Activated naive CD4-positive, alpha-beta T cell treated with anti-CD3 and anti-CD28 coated beads for 36 hours (primary cell): ENCODE measurements at regions of chr7 and their contacts with region 1.

Region 1: GRCh38 chr7:138738551-138739335 is 37.6 kb upstream of the SVOPL start:
- DNase-seq: peak; percentile 94
- H3K4me3 Mint-ChIP-seq: no peak overlapping the region
- H3K27ac Mint-ChIP-seq: no peak overlapping the region
- H3K4me1 Mint-ChIP-seq: peaks cover 6% of the 10 kb centered on the region
- H3K27me3 Mint-ChIP-seq: no peaks in the 10 kb centered on the region

Region 2: DNA sequence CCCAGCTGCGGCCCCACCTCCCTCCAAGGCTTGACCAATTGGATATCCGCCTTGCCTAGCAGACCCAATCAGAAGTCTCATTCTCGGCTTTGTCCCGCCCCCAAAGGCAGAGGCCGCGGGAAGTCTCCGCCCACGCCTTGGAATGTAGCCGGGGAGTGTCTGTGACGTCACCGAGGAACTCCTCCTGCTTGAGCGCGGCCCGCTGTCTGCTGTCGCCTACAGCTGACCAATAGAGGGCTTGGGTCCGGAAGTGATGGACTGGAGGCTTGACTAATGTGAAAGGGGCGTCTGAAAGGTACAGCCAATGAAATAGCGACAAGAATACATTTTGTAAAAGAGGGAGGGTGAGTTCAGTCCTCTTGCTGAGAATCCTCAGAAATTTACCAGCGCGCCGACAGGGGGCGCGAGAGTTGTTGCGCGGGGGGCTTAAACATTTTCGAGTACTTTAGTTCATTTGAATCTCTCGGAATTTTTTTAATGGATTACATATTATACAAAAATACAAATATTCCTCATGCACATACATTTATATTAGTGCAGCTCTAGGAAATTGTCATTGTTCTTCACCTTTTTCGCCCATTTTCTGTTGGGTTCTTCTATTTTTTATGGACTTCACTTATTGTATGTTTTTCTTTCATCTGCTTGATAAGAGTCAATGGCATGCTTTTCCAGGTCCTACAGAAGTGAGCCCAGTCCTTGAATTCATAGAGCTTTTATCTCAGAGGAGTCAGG is 736.5 kb before region 1 on chr7:
- CTCF ChIA-PET with region 1: no interaction called
- intact Hi-C with region 1: loop called (anchors 2 kb)
- DNase-seq: peak; percentile 98
- H3K4me3 Mint-ChIP-seq: peak overlapping the region; percentile 91
- H3K27ac Mint-ChIP-seq: peak overlapping the region; percentile 76
- H3K4me1 Mint-ChIP-seq: peaks cover 25% of the 10 kb centered on the region
- H3K27me3 Mint-ChIP-seq: no peaks in the 10 kb centered on the region

Region 3: DNA sequence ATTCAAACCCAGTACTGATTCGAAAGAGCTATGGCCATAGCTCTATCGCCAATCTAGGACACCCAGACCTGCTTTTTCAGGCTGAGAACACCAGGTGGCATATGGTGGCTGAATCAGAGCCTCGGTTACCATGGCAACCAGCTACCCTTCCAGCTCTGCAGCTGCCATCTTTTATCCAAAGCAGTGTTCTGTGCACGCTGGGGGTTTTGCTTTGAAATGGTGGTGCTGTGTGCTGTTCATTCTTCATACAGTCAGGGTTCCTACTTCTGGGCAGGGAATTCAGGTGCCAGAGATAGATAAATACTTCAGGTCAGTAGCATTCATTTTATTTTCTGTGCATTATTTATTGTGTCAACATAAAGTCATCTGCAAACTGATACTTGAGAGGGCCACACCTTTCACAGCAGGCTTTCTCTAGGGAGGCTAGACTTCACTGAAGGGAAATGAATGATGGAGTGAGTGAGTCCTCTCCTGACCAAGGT is 577.1 kb before region 1 on chr7:
- CTCF ChIA-PET with region 1: interaction called, 33 read pairs
- intact Hi-C with region 1: loop called (anchors 1 kb)
- DNase-seq: peak; percentile 88
- H3K4me3 Mint-ChIP-seq: no peak overlapping the region
- H3K27ac Mint-ChIP-seq: no peak overlapping the region
- H3K4me1 Mint-ChIP-seq: no peaks in the 10 kb centered on the region
- H3K27me3 Mint-ChIP-seq: no peaks in the 10 kb centered on the region

Region 4: GRCh38 chr7:138359906-138360582 is 378.7 kb before region 1 on chr7:
- CTCF ChIA-PET with region 1: no interaction called
- intact Hi-C with region 1: loop called (anchors 5 kb)
- DNase-seq: no peak
- H3K4me3 Mint-ChIP-seq: no peak overlapping the region
- H3K27ac Mint-ChIP-seq: no peak overlapping the region
- H3K4me1 Mint-ChIP-seq: no peaks in the 10 kb centered on the region
- H3K27me3 Mint-ChIP-seq: no peaks in the 10 kb centered on the region

Region 5: DNA sequence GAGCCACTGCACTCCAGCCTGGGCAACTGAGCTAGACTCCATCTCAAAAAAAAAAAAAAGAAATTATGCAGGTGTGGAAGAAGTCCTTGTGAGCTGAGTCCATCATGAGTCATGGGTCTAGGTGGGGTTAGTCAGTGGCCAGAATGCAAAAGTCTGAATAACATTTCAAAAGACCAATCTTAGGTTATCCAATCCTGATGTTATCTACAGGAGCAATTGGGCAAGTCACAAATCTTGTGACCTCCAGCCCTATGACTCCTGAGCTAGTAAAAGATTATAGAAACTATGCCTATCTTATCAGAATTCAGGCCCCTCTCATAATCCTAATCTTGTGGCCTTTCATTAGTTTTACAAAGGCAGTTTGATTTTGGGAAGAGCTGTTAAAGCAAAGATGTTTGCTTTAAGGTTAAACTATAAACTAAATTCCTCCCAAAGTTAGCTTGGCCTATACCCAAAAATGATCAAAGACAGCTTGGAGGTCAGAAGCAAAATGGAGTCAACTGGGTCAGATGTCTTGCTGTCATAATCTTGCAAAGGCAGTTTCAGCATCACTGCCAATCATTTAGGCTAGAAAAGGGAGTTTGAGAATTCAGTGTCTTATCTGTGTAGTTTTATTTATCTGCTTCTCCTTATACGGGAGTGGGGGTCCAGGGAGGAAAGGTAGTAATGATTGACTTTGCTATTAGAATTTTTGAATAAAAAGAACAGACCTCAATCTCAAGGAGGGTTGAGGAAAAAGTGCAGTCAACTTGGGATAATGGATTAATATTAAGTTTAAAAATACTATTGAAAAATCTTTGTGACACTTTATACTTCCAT is 349.9 kb before region 1 on chr7:
- CTCF ChIA-PET with region 1: no interaction called
- intact Hi-C with region 1: no loop called
- DNase-seq: no peak
- H3K4me3 Mint-ChIP-seq: no peak overlapping the region
- H3K27ac Mint-ChIP-seq: no peak overlapping the region
- H3K4me1 Mint-ChIP-seq: no peaks in the 10 kb centered on the region
- H3K27me3 Mint-ChIP-seq: no peaks in the 10 kb centered on the region

Region 6: GRCh38 chr7:138625849-138626230 is 112.9 kb before region 1 on chr7:
- CTCF ChIA-PET with region 1: interaction called, 14 read pairs
- intact Hi-C with region 1: no loop called
- DNase-seq: peak; percentile 38
- H3K4me3 Mint-ChIP-seq: no peak overlapping the region
- H3K27ac Mint-ChIP-seq: peak overlapping the region; percentile 72
- H3K4me1 Mint-ChIP-seq: peaks cover 43% of the 10 kb centered on the region
- H3K27me3 Mint-ChIP-seq: no peaks in the 10 kb centered on the region

Region 7: DNA sequence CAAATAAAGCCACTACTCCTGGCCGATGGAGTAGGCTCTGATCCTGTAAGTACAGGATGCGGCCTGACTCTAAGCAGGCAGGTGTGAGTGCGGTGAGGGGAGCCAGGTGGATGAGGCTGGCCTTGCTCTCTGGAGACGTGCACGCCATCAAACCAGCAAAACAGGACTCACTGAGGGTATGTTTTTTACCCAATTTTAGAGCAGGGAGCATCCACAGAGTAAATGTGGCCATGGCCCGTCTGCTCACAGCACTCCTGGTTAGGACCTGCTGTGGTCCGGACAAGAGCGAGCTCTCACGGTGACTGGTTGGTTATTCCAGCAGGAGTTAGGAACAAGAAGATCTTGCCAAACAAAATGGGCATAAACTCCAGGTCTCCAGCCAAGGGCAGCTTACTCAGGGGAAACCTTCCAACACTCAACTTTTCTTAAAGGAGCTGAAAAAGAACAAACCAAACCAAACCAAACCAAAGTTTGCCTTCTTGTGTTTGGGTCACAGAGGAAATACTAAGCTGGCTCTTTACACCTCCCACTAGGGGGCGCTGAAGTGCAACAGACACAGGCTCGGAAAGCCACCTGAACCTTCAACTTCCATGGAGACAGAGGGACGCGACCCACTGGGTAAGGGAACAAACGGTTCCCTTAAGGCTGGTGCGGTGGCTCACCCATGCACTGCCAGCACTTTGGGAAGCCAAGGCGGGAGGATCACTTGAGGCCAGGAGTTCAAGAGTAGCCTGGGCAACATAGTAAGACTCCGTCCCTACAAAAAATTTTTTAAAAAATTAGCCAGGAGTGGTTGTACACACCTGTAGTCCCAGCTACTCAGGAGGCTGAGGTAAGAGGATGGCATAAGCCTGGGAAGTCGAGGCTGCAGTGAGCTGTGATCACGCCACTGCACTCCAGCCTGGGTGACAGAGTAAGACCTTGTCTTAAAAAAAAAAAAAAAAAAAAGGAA is 907.1 kb after region 1 on chr7:
- CTCF ChIA-PET with region 1: no interaction called
- intact Hi-C with region 1: no loop called
- DNase-seq: peak; percentile 93
- H3K4me3 Mint-ChIP-seq: no peak overlapping the region
- H3K27ac Mint-ChIP-seq: no peak overlapping the region
- H3K4me1 Mint-ChIP-seq: peaks cover 69% of the 10 kb centered on the region
- H3K27me3 Mint-ChIP-seq: no peaks in the 10 kb centered on the region